MCF 10A (cell line): ENCODE measurements at regions of chr12 and their contacts with region 1.

Region 1: GRCh38 chr12:67222302-67222701 is 46.9 kb upstream of the CAND1 start:
- DNase-seq: peak; percentile 50
- H3K4me3 Mint-ChIP-seq: no peak overlapping the region
- H3K27ac Mint-ChIP-seq: no peak overlapping the region
- H3K4me1 Mint-ChIP-seq: no peaks in the 10 kb centered on the region
- H3K27me3 Mint-ChIP-seq: peaks cover 21% of the 10 kb centered on the region
- CTCF ChIP-seq: peak; percentile 44

Region 2: DNA sequence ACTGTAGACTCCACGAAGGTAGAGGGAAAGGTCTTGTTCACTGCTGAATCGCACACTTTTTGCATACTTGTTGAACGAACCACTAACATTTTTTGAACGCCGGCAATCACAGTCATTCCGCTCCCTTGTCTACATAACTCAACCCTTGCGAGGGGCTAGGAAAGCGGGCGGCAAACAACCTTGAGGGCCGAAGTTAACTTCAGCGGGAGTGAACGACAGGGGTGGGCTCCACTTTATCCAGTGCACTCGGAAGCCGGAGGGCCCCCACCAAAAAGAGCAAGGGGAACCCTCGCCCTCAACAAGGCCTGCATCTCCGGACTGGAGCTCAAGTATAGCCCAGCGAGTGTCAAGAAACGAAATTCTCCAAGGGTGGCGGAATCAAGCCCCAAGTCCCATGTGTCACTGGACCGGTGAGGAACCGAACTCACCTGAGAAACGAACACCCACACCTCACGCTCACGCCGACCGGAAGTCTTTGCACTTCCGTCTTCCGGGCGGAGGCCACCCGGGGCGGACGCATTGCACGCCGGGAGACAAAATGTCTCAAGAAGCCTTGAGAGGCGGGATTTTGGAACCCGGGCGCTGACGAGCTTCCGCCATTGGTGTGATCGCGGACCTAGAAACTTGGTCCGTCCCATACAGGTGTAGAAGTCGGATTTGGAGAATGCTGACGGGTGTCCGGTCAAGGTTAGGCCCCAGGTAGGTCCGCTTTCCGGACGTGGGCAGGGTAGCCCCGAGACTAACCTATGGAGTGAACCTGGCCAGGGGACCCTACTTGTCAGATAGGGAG is 1091.8 kb before region 1 on chr12 and contains the start of gene LLPH:
- CTCF ChIA-PET with region 1: no interaction called
- POLR2A ChIA-PET with region 1: no interaction called
- intact Hi-C with region 1: no loop called
- DNase-seq: peak; percentile 93
- H3K4me3 Mint-ChIP-seq: peak within 1 kb of the TSS; percentile 90
- H3K27ac Mint-ChIP-seq: peak within 1 kb of the TSS; percentile 89
- H3K4me1 Mint-ChIP-seq: peaks cover 35% of the 10 kb centered on the region
- H3K27me3 Mint-ChIP-seq: no peaks in the 10 kb centered on the region
- CTCF ChIP-seq: no peak
- total RNA-seq, gene LLPH: 43.8 and 44.3 TPM in 2 replicates

Region 3: DNA sequence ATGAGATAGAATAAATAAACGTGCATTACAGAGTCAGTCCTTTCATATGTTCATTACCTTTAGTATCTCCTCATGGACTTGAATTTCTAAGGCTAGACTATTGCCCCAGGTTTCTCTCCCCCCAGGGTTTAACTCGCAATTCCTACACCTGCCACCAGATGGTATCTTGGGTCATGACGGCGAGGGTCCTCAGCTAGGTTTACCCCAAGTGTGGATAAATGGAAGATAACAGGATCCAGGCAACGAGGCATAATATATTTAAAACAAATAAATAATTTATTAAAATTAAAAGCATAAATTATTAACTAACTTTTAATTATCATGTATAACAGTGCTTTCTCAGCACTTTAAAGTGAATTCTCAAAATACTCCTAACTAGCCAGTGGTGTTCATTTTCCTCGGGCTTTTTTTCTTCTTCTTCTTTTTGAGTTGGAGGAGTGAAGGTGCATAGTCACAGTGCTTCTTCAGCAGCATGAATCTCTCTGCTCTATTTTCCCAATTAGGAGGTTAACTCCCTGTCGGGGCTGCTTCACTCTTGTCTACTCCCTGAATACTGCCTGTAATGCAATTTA is 196.7 kb before region 1 on chr12:
- CTCF ChIA-PET with region 1: interaction called, 81 read pairs
- POLR2A ChIA-PET with region 1: interaction called, 3 read pairs
- intact Hi-C with region 1: loop called (anchors 1 kb)
- DNase-seq: peak; percentile 62
- H3K4me3 Mint-ChIP-seq: no peak overlapping the region
- H3K27ac Mint-ChIP-seq: no peak overlapping the region
- H3K4me1 Mint-ChIP-seq: no peaks in the 10 kb centered on the region
- H3K27me3 Mint-ChIP-seq: peaks cover 16% of the 10 kb centered on the region
- CTCF ChIP-seq: peak; percentile 88

Region 4: GRCh38 chr12:67068761-67069450 is 153.4 kb before region 1 on chr12:
- CTCF ChIA-PET with region 1: interaction called, 10 read pairs
- POLR2A ChIA-PET with region 1: no interaction called
- intact Hi-C with region 1: loop called (anchors 1 kb)
- DNase-seq: peak; percentile 69
- H3K4me3 Mint-ChIP-seq: peak overlapping the region; percentile 77
- H3K27ac Mint-ChIP-seq: peak overlapping the region; percentile 63
- H3K4me1 Mint-ChIP-seq: peaks cover 21% of the 10 kb centered on the region
- H3K27me3 Mint-ChIP-seq: no peaks in the 10 kb centered on the region
- CTCF ChIP-seq: peak; percentile 1

Region 5: DNA sequence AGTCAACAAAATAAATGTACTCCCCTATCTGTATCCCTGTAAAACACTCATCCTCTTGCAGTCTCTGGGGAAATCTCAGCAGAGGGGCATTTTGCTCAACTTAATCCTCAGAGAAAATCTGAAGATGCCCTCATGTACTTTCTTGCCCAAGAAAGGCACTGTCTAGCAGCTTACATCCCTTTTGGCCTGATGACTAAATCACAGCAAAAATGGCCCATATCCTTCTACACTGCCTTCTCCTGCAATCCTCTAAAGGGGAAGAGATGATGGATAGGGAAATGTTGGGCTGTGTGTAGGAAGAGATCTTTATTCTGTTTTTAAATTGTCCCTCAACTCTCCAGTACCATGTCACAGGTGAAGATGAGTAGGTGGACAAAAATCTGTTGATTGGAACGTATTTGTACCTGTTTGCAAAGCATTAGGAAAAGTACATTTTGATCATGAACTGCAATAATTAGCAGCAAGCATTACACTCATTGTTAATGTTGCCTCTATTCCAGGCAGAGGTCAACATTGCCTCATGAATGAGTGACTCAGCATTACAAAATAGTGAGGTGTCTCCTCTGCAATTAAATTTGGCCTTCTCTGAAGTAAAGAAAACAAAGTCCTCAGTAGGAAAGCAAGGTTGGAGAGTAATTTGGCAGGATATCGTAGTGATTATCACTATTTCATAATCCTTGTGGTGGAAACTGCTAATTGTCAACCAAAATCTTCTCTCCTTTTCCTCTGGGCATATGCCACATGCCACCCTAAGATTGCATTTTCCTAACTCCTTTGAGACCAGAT is 125.6 kb before region 1 on chr12:
- CTCF ChIA-PET with region 1: interaction called, 16 read pairs
- POLR2A ChIA-PET with region 1: no interaction called
- intact Hi-C with region 1: no loop called
- DNase-seq: peak; percentile 91
- H3K4me3 Mint-ChIP-seq: no peak overlapping the region
- H3K27ac Mint-ChIP-seq: peak overlapping the region; percentile 30
- H3K4me1 Mint-ChIP-seq: peaks cover 13% of the 10 kb centered on the region
- H3K27me3 Mint-ChIP-seq: no peaks in the 10 kb centered on the region
- CTCF ChIP-seq: no peak

Region 6: GRCh38 chr12:67173258-67173657 is 49.0 kb before region 1 on chr12:
- CTCF ChIA-PET with region 1: no interaction called
- POLR2A ChIA-PET with region 1: no interaction called
- intact Hi-C with region 1: no loop called
- DNase-seq: no peak
- H3K4me3 Mint-ChIP-seq: no peak overlapping the region
- H3K27ac Mint-ChIP-seq: no peak overlapping the region
- H3K4me1 Mint-ChIP-seq: no peaks in the 10 kb centered on the region
- H3K27me3 Mint-ChIP-seq: peaks cover 89% of the 10 kb centered on the region
- CTCF ChIP-seq: no peak

Region 7: DNA sequence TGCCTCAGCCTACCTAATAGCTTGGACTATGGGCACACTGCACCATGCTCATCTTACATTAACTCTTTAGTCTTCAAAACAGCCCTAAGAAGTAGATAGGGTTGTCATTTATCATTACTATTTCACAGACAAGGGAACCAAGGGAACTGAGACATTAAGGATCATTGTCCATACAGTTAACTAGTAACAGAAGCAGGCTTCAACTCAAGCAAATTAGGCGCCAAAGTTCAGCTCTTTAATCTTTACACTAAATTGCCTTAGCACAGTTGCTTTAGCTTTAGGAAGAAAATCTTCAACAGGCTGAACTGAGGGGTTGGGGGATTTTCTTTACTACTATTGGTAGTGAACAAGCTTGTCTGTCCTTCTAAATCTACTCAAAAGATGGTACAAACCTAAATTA is 21.9 kb before region 1 on chr12:
- CTCF ChIA-PET with region 1: interaction called, 13 read pairs
- POLR2A ChIA-PET with region 1: no interaction called
- intact Hi-C with region 1: no loop called
- DNase-seq: no peak
- H3K4me3 Mint-ChIP-seq: no peak overlapping the region
- H3K27ac Mint-ChIP-seq: no peak overlapping the region
- H3K4me1 Mint-ChIP-seq: no peaks in the 10 kb centered on the region
- H3K27me3 Mint-ChIP-seq: peaks cover 84% of the 10 kb centered on the region
- CTCF ChIP-seq: no peak

Region 8: DNA sequence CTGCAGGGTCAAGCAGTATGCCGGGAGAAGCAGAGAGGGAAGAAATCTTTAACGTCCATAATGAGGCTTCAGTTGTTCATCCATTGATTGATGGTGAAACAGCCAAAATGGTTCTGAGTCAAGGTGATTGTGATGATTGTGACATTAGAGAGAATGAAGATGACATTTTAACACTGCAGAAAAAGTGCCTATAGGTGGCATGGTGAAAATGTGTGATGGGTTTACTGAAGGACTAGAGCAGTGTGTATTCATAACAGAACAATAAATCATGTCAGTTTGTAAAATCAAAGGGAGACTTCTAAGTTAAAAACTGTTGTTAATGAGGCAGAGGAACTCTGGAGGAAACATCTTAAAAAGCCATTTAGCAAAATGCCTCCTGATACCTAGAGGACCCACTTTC is 10.8 kb before region 1 on chr12:
- CTCF ChIA-PET with region 1: no interaction called
- POLR2A ChIA-PET with region 1: no interaction called
- intact Hi-C with region 1: no loop called
- DNase-seq: no peak
- H3K4me3 Mint-ChIP-seq: no peak overlapping the region
- H3K27ac Mint-ChIP-seq: no peak overlapping the region
- H3K4me1 Mint-ChIP-seq: no peaks in the 10 kb centered on the region
- H3K27me3 Mint-ChIP-seq: peaks cover 88% of the 10 kb centered on the region
- CTCF ChIP-seq: no peak